ENCODE measurements at regions of chr2 and their contacts with region 1.

Region 1: GRCh38 chr2:69061525-69061924 is 48.5 kb downstream of the ANTXR1 start:
- DNase-seq: no peak
- H3K4me3 ChIP-seq: no peak overlapping the region
- H3K27ac ChIP-seq: peak overlapping the region; percentile 64
- H3K4me1 ChIP-seq: peaks cover 13% of the 10 kb centered on the region
- H3K27me3 ChIP-seq: no peaks in the 10 kb centered on the region
- CTCF ChIP-seq: no peak
- POLR2A ChIP-seq: no peak

Region 2: DNA sequence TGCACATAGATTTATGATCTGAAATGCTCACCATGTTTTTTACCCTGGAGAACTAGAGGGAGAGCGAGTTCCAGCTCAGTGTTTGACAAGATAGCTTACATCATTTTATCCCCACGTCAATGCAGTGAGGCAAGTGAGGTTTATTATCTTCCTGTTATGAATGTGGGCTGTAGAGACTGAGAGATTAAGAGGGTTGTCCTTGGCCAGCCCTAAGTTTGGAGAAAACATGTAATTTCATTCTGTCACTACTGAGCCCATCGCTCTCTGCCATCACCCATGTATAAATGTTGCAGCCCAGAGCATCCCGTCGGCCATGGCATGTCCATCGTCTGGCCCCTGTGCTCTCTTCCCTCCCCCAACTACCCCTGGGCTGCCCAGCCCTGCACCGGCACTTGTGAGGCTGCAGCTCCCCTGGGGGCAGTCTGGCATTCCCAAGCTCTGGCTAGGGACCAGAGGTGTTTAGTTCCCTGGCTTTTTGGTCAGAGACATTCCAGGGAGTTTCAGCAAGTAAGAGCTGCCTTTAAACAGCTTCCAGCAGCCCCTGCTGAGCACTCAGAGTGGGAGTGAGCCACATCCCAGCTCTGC is 88.2 kb after region 1 on chr2:
- intact Hi-C with region 1: loop called (anchors 10 kb)
- DNase-seq: no peak
- H3K4me3 ChIP-seq: no peak overlapping the region
- H3K27ac ChIP-seq: peak overlapping the region; percentile 80
- H3K4me1 ChIP-seq: peaks cover 29% of the 10 kb centered on the region
- H3K27me3 ChIP-seq: no peaks in the 10 kb centered on the region
- CTCF ChIP-seq: no peak
- POLR2A ChIP-seq: no peak

Measured in vagina (tissue), 2 donors.